ENCODE measurements at regions of chr1 and their contacts with region 1.

Region 1: GRCh38 chr1:155250633-155251449 is 4.4 kb downstream of the ENTREP3 start:
- DNase-seq: peak; percentile 90 to 99 (median 96)
- ATAC-seq: peak; percentile 93 to 99
- H3K4me3 Mint-ChIP-seq: peak overlapping the region; percentile 60 to 82 (median 72)
- H3K27ac Mint-ChIP-seq: peak overlapping the region in 9 of 10 donors; percentile 31 to 84 (median 69)
- H3K4me1 Mint-ChIP-seq: peaks cover 14 to 33% (median 29%) of the 10 kb centered on the region in 4 donors
- H3K27me3 Mint-ChIP-seq: no peaks in the 10 kb centered on the region

Region 2: GRCh38 chr1:154837672-154838171 is 413.1 kb before region 1 on chr1:
- POLR2A ChIA-PET with region 1: no interaction called
- DNase-seq: no peak
- ATAC-seq: no peak
- H3K4me3 Mint-ChIP-seq: no peak overlapping the region
- H3K27ac Mint-ChIP-seq: no peak overlapping the region
- H3K4me1 Mint-ChIP-seq: peaks cover 0 to 2% (median 0%) of the 10 kb centered on the region in 4 donors
- H3K27me3 Mint-ChIP-seq: peaks cover 0 to 3% (median 0%) of the 10 kb centered on the region in 5 donors

Region 3: GRCh38 chr1:155261852-155262673 is 11.2 kb after region 1 on chr1 and contains the start of gene SCAMP3:
- POLR2A ChIA-PET with region 1: interaction called, 33 read pairs
- DNase-seq: peak; percentile 65 to 93 (median 82)
- ATAC-seq: peak; percentile 97 to 98
- H3K4me3 Mint-ChIP-seq: peak within 1 kb of the TSS; percentile 94 to 99 (median 98)
- H3K27ac Mint-ChIP-seq: peak within 1 kb of the TSS; percentile 94 to 99 (median 97)
- H3K4me1 Mint-ChIP-seq: peaks cover 21 to 41% (median 29%) of the 10 kb centered on the region in 4 donors
- H3K27me3 Mint-ChIP-seq: no peaks in the 10 kb centered on the region
- polyA plus RNA-seq, gene SCAMP3: 124 to 189 (median 138) TPM

Region 4: GRCh38 chr1:155277070-155277895 is 26.4 kb after region 1 on chr1 and contains the start of gene HCN3:
- POLR2A ChIA-PET with region 1: interaction called, 24 read pairs
- DNase-seq: peak; percentile 68 to 94 (median 82)
- ATAC-seq: peak; percentile 34 to 62
- H3K4me3 Mint-ChIP-seq: peak within 1 kb of the TSS; percentile 68 to 84 (median 78)
- H3K27ac Mint-ChIP-seq: peak within 1 kb of the TSS in 8 of 10 donors; percentile 23 to 88 (median 67)
- H3K4me1 Mint-ChIP-seq: peaks cover 16 to 42% (median 36%) of the 10 kb centered on the region in 4 donors
- H3K27me3 Mint-ChIP-seq: no peaks in the 10 kb centered on the region
- polyA plus RNA-seq, gene HCN3: 0.20 to 0.51 TPM in 2 of 3 donors, not detected in the other

Region 5: DNA sequence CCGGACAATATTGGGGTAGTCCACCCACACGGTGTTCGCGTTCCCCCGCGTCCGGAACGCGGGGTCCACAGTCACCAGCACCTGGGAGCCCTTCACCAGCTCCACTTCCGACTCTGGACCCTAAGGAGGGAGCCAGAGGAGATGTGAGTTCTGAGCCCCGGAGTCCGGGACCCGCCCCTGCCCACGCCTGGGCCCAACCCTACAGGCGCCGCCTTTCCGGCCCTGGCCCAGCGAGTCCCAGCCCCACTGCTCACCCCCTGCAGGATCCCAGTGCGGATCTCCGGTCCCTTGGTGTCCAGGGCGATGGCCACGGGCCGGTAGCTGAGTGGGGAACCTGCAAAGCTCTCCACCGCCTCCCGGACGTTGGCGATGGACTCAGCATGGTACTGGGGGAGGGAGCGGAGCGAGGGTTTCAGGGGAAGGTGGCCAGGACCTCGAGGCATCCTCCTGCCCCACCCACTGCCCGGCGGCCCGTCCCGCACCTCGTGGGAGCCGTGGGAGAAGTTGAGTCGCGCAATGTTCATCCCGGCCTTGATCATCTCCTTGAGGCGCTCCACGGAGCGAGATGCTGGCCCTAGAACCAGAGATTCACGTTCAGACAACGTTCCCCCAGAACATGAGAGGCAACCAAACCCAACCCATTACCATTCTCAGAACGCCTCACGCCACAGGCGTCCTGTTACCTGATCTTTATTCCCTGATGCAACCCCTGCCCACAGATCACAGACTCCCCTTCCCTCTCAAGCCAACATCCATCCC is 44.5 kb after region 1 on chr1:
- POLR2A ChIA-PET with region 1: no interaction called
- DNase-seq: no peak
- ATAC-seq: no peak
- H3K4me3 Mint-ChIP-seq: no peak overlapping the region
- H3K27ac Mint-ChIP-seq: no peak overlapping the region
- H3K4me1 Mint-ChIP-seq: peaks cover 3 to 11% (median 6%) of the 10 kb centered on the region in 4 donors
- H3K27me3 Mint-ChIP-seq: peaks cover 23 to 49% (median 38%) of the 10 kb centered on the region in 5 donors

Region 6: GRCh38 chr1:155308493-155309422 is 57.9 kb after region 1 on chr1 and contains the start of gene FDPS:
- POLR2A ChIA-PET with region 1: interaction called, 11 read pairs
- DNase-seq: peak; percentile 88 to 98 (median 96)
- ATAC-seq: peak; percentile 98
- H3K4me3 Mint-ChIP-seq: peak within 1 kb of the TSS; percentile 90 to 99 (median 96)
- H3K27ac Mint-ChIP-seq: peak within 1 kb of the TSS; percentile 91 to 98 (median 96)
- H3K4me1 Mint-ChIP-seq: peaks cover 12 to 36% (median 25%) of the 10 kb centered on the region in 4 donors
- H3K27me3 Mint-ChIP-seq: no peaks in the 10 kb centered on the region
- polyA plus RNA-seq, gene FDPS: 97.2 to 120 (median 105) TPM